Tibial artery (tissue), 4 donors: ENCODE measurements at regions of chr14 and their contacts with region 1.

Region 1: GRCh38 chr14:24146978-24147760 is at the start of gene RNF31:
- DNase-seq: peak; percentile 99
- H3K4me3 ChIP-seq: peak within 1 kb of the TSS; percentile 79 to 92
- H3K27ac ChIP-seq: peak within 1 kb of the TSS; percentile 86 to 87
- H3K4me1 ChIP-seq: peaks cover 12 to 33% (median 25%) of the 10 kb centered on the region in 4 donors
- H3K27me3 ChIP-seq: no peaks in the 10 kb centered on the region
- CTCF ChIP-seq: no peak

Region 2: GRCh38 chr14:24188251-24189058 is 41.3 kb after region 1 on chr14 and contains the start of gene IPO4:
- intact Hi-C with region 1: loop called (anchors 5 kb)
- DNase-seq: peak; percentile 96 to 97
- H3K4me3 ChIP-seq: peak within 1 kb of the TSS; percentile 56 to 67
- H3K27ac ChIP-seq: peak within 1 kb of the TSS; percentile 65 to 73
- H3K4me1 ChIP-seq: peaks cover 0 to 24% (median 17%) of the 10 kb centered on the region in 4 donors
- H3K27me3 ChIP-seq: no peaks in the 10 kb centered on the region
- CTCF ChIP-seq: peak in 1 of 2 experiments; percentile 9